ENCODE measurements at regions of chr15 and their contacts with region 1.

Region 1: DNA sequence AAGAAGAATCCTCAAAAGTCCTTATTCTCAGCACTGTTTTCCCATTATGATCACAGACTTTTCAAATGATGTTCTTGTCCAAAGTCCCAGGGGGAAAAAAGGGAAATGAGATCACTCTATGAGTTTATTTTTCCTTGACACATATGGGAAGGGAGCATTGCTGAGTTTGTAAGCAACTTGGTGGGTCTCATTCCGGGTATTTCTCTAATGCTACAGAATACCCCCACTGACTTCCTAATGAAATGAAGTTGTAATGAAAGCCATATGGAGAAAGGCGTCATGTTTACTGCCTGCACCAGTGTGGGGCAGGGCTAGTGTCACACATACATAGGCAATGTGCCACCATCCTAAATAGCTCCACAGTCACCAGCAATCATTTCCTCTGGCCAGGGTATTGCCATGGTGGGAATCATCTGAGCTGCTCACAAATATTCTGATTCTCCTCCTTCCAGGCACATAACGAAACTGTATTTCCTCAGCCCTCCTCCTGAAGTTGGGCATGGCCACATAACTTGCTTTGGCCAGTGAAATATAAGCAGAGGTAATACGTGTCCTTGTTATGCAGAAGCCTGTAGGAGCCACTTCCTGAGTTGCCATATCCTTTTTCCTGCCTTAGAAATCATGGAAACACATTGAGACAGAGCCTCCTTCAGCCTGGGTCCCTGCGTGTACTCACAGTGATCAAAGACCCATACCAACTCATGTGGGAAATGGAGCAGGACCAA is 41.0 kb upstream of the C15orf61 start:
- DNase-seq: no peak
- H3K4me3 ChIP-seq: no peak overlapping the region
- H3K27ac ChIP-seq: no peak overlapping the region
- H3K4me1 ChIP-seq: no peaks in the 10 kb centered on the region
- H3K27me3 ChIP-seq: no peaks in the 10 kb centered on the region
- CTCF ChIP-seq: no peak
- EP300 ChIP-seq: no peak
- POLR2A ChIP-seq: no peak

Region 2: GRCh38 chr15:67559158-67559557 is 79.2 kb after region 1 on chr15:
- intact Hi-C with region 1: no loop called
- DNase-seq: no peak
- H3K4me3 ChIP-seq: no peak overlapping the region
- H3K27ac ChIP-seq: no peak overlapping the region
- H3K4me1 ChIP-seq: no peaks in the 10 kb centered on the region
- H3K27me3 ChIP-seq: no peaks in the 10 kb centered on the region
- CTCF ChIP-seq: no peak
- EP300 ChIP-seq: no peak
- POLR2A ChIP-seq: no peak

Region 3: GRCh38 chr15:67812241-67812644 is 332.3 kb after region 1 on chr15:
- intact Hi-C with region 1: loop called in 1 of 4 experiments (anchors 10 kb)
- DNase-seq: no peak
- H3K4me3 ChIP-seq: no peak overlapping the region
- H3K27ac ChIP-seq: no peak overlapping the region
- H3K4me1 ChIP-seq: no peaks in the 10 kb centered on the region
- H3K27me3 ChIP-seq: no peaks in the 10 kb centered on the region
- CTCF ChIP-seq: no peak
- EP300 ChIP-seq: no peak
- POLR2A ChIP-seq: no peak

Region 4: GRCh38 chr15:68469162-68470048 is 989.5 kb after region 1 on chr15:
- intact Hi-C with region 1: no loop called
- DNase-seq: no peak
- H3K4me3 ChIP-seq: no peak overlapping the region
- H3K27ac ChIP-seq: no peak overlapping the region
- H3K4me1 ChIP-seq: no peaks in the 10 kb centered on the region
- H3K27me3 ChIP-seq: no peaks in the 10 kb centered on the region
- CTCF ChIP-seq: no peak
- EP300 ChIP-seq: no peak
- POLR2A ChIP-seq: no peak

Measured in ovary (tissue), 10 donors.